ENCODE measurements at regions of chrX and their contacts with region 1.

Region 1: GRCh38 chrX:102599951-102600579 is 750 bp downstream of the ARMCX5 start:
- H3K4me3 Mint-ChIP-seq: peak overlapping the region; percentile 100
- H3K27ac Mint-ChIP-seq: peak overlapping the region; percentile 98
- H3K4me1 Mint-ChIP-seq: peaks cover 28% of the 10 kb centered on the region
- H3K27me3 Mint-ChIP-seq: peaks cover 3% of the 10 kb centered on the region

Region 2: DNA sequence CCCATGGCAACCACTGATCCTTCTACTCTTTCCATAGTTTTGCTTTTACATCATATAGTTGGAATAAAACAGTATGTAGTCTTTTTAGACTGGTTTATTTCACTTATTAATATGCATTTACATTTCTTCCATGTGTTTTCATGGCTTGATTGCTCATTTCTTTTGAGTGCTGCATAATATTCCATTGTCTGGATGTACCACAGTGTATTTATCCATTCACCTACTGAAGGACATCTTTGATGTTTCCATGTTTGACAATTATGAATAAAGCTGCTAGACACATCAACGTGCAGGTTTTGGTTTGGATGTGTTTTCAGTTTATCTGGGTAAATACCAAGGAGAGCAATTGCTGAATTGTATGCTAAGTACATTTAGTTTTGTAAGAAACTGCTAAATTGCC is 37.5 kb after region 1 on chrX:
- intact Hi-C with region 1: no loop called
- H3K4me3 Mint-ChIP-seq: no peak overlapping the region
- H3K27ac Mint-ChIP-seq: no peak overlapping the region
- H3K4me1 Mint-ChIP-seq: peaks cover 7% of the 10 kb centered on the region
- H3K27me3 Mint-ChIP-seq: no peaks in the 10 kb centered on the region

Region 3: GRCh38 chrX:102659790-102660757 is 60.0 kb after region 1 on chrX:
- intact Hi-C with region 1: loop called (anchors 10 kb)
- H3K4me3 Mint-ChIP-seq: peak overlapping the region; percentile 90
- H3K27ac Mint-ChIP-seq: peak overlapping the region; percentile 94
- H3K4me1 Mint-ChIP-seq: peaks cover 15% of the 10 kb centered on the region
- H3K27me3 Mint-ChIP-seq: peaks cover 4% of the 10 kb centered on the region

Measured in dendritic cell treated with granulocyte-macrophage colony-stimulating factor and Interleukin-4, amounts not matched to agents 40 ng/mL and 50 ng/mL, for 4 days (primary cell).